ENCODE measurements at regions of chr14 and their contacts with region 1.

Region 1: GRCh38 chr14:57268161-57269069 is at the starts of genes AP5M1 and EXOC5:
- DNase-seq: peak; percentile 83 to 94 (median 92)
- H3K4me3 ChIP-seq: peak within 1 kb of the TSS; percentile 58 to 98 (median 88)
- H3K27ac ChIP-seq: peak within 1 kb of the TSS; percentile 71 to 98 (median 93)
- H3K27me3 ChIP-seq: no peaks in the 10 kb centered on the region
- CTCF ChIP-seq: peak in 32 of 56 donors; percentile 6 to 68 (median 32)
- total RNA-seq, gene AP5M1: 38.9 to 81.9 (median 60.1) TPM
- total RNA-seq, gene EXOC5: 64.1 to 102 (median 83.3) TPM

Region 2: GRCh38 chr14:56579345-56580220 is 688.8 kb before region 1 on chr14 and contains the start of gene TMEM260:
- intact Hi-C with region 1: loop called (anchors 5 to 10 kb)
- DNase-seq: peak; percentile 71 to 89 (median 79)
- H3K4me3 ChIP-seq: peak within 1 kb of the TSS; percentile 37 to 100 (median 94)
- H3K27ac ChIP-seq: peak within 1 kb of the TSS; percentile 11 to 98 (median 91)
- H3K27me3 ChIP-seq: no peaks in the 10 kb centered on the region
- CTCF ChIP-seq: peak; percentile 85 to 99 (median 95)
- total RNA-seq, gene TMEM260: 20.8 to 56.5 (median 39.2) TPM

Region 3: DNA sequence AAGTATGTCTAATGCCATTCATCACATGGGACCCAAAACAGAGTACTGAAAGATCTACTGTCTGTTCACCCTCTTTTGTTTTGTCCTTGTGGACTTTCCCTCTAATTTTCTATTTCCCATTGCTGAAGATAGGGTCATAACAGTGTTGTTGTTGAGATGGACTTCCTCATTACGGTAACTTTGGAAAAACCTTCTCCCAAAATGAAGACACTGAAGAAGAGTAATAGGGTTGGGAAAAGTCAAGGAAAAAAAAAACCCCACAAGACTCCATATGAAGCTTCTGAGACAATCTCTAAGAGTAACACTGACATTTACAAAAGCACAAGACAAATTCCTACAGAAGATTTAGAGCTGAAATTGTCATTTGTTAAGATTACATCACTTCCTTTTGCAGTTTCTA is 36.4 kb before region 1 on chr14:
- intact Hi-C with region 1: no loop called
- DNase-seq: no peak
- H3K4me3 ChIP-seq: no peak overlapping the region
- H3K27ac ChIP-seq: no peak overlapping the region
- H3K27me3 ChIP-seq: no peaks in the 10 kb centered on the region
- CTCF ChIP-seq: peak in 1 of 56 donors; percentile 10

Region 4: DNA sequence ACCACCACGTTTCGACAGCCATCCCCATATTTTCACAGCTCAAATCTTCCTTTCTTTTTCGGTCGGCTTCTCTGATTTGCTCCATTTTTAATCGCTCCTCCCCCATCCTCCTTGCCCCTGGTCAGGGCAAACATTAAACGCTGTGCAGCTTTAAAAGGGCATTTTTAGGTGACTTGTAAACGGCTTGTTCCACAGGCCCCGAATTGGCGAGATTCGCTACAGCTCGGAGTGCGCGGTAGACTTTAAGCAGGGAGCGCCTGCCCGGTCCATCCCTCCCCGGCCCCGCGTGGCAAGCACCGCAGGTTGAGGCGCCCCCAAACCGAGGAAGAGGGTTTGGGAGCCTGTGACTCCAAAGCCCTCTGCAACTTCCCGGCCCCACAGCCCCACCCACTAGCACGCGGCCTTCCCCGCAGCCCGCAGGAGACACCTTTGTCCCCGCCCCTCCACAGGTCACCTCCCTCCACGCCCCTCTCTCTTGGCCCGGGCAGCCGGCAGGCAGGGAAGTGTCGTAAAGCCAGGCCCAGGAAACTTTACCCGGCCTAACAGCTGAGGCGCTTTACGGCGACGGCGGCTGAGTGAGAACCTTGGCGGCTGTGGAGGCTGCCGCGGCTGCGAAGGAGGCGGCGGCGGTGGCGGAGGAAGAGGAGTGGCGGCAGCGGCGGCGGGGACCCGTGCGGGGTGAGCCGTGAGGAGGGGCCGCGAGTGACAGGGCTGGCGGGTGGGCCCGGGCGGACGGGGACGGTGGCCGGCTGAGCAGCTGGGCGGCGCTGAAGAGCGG is 121.8 kb after region 1 on chr14 and contains the start of gene NAA30:
- intact Hi-C with region 1: loop called (anchors 5 to 10 kb)
- DNase-seq: peak; percentile 64 to 90 (median 86)
- H3K4me3 ChIP-seq: peak within 1 kb of the TSS; percentile 59 to 96 (median 87)
- H3K27ac ChIP-seq: peak within 1 kb of the TSS; percentile 39 to 96 (median 87)
- H3K27me3 ChIP-seq: no peaks in the 10 kb centered on the region
- CTCF ChIP-seq: peak in 21 of 56 donors; percentile 5 to 54 (median 24)
- total RNA-seq, gene NAA30: 16.6 to 44.4 (median 29.1) TPM

Measured in dorsolateral prefrontal cortex (tissue), 120 donors.